Left ventricle myocardium superior (tissue), 1 donor: ENCODE measurements at regions of chr9 and their contacts with region 1.

Region 1: GRCh38 chr9:92790542-92791527 is 26.2 kb upstream of the BICD2 start:
- DNase-seq: peak; percentile 81
- ATAC-seq: peak; percentile 98

Region 2: GRCh38 chr9:92716557-92716956 is 74.3 kb before region 1 on chr9:
- intact Hi-C with region 1: loop called (anchors 5 kb)
- DNase-seq: peak; percentile 74
- ATAC-seq: peak; percentile 54